ENCODE measurements at regions of chr19 and their contacts with region 1.

Region 1: DNA sequence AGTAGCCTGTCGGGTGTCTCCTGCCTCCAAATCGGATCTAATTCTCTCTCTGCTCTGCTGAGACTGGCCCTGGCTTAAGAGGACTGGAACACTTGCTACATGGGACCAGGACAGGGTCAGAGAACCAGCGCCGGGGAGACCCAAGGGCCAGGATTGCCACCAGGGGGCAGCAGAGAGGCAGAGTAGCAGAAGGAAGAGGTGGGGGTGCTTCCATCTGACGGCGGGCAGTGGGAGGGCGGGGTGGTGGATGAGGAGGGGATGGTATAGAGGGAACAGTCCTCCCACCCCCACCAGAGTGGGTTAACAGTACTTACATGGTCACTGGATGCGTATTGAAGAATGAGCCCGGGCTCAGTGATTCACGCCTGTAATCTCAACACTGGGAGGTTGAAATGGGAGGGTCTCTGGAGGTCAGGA is 11.9 kb downstream of the SELENOW start:
- DNase-seq: peak; percentile 90
- ATAC-seq: peak; percentile 60

Region 2: DNA sequence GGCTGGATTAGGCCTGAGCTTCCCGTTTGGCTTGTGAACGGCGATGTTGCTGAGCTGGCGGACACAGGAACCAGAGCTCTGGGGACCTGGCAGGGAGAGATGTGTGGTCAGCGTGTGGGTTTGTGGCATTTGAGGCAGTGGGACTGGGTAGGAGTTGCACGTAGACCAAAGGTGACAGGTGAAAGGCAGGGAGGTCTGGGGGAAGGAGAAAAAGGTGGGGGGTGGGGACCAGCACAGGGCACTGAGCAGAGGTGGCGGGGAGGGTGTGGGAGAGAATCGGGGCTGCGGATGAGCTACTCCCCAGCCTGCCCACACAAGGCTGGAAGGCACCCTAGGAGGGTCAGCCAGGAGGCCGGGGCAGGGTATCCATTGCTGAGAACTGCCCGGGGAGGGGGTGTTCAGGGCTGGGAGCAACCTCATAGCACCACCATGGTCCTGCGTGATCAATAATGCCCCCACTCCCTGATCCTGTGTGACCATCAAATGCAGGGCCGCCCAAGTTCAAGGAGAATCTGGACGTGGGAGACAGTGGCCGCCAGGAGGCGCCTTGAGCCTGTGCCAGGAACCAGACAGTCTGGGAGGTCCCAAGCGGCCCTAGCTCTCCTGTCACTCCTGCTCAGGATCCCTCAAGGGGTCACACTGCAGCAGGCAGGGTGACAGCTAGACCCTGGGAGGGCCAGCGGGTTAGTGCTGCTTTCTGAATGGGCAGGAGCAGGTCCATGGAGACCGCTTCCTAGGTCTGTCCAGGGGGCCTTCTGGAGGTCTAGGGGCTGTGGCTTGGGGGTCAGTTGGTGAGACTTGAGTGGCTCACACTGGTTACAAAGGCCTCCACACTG is 24.7 kb before region 1 on chr19:
- intact Hi-C with region 1: loop called (anchors 2 kb)
- DNase-seq: peak; percentile 83
- ATAC-seq: peak; percentile 85

Region 3: GRCh38 chr19:48135411-48135810 is 345.0 kb after region 1 on chr19:
- intact Hi-C with region 1: no loop called
- DNase-seq: no peak
- ATAC-seq: no peak